Activated CD4-positive, alpha-beta memory T cell treated with anti-CD3 and anti-CD28 coated beads for 36 hours (primary cell): ENCODE measurements at regions of chr17 and their contacts with region 1.

Region 1: GRCh38 chr17:77331301-77331864 is 190.6 kb downstream of the SEC14L1 start:
- DNase-seq: peak; percentile 97
- H3K4me3 Mint-ChIP-seq: peak overlapping the region; percentile 64
- H3K27ac Mint-ChIP-seq: peak overlapping the region; percentile 78
- H3K4me1 Mint-ChIP-seq: peaks cover 38% of the 10 kb centered on the region
- H3K27me3 Mint-ChIP-seq: no peaks in the 10 kb centered on the region

Region 2: DNA sequence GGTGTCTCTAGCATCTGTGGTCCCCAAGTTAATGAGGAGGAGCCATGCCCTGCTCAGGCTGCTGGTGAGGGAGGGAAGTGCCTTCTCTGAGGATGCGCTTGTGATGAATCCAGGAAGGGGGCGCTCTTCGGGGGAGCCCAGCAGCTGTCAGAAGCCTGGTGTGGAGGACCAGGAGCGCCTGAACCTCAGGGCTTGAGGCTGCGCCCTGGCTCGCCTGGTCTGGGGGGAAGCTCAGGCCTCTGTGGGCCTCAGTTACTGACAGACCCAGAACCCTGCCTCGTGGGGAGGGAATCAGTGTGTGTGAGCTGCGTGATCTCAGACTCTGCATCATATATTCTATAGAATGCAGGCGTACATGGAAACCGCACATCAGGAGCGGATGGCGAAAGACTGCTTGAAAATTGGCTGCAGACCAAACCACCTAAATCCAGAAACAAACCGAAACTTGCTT is 64.5 kb before region 1 on chr17:
- CTCF ChIA-PET with region 1: no interaction called
- POLR2A ChIA-PET with region 1: no interaction called
- intact Hi-C with region 1: no loop called
- DNase-seq: no peak
- H3K4me3 Mint-ChIP-seq: no peak overlapping the region
- H3K27ac Mint-ChIP-seq: no peak overlapping the region
- H3K4me1 Mint-ChIP-seq: no peaks in the 10 kb centered on the region
- H3K27me3 Mint-ChIP-seq: no peaks in the 10 kb centered on the region

Region 3: DNA sequence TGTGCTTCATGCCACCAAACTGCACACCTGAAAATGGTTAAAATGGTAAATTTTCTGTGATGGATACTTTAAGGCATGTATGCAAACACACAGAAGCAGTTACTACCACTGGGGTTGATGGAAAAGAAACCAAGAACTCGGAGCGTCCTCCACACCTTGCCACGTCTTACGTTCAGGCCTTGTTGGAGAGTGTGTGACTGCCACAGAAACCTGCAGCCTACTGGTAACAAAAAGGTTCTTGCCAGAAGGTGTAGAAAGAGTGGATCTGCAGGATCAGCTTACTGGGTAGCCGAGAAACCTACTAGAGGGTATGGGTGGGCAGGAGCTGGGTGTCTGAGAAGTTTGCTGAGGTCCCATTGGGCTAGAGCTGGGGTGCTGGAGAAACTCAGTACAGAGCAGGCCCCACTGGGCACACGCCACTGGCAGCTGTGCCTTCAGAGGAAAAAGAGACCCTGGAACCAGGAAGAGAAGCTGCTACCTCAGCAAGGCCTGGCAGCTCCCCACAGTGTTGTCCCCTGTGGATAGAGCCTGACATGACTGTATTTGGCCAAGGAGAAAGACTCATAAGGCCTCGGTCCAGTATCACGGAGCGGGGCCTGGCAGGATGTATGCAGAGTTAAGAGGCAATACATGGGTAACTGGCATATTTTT is 14.0 kb after region 1 on chr17:
- CTCF ChIA-PET with region 1: interaction called, 20 read pairs
- POLR2A ChIA-PET with region 1: interaction called, 3 read pairs
- intact Hi-C with region 1: loop called (anchors 1 kb)
- DNase-seq: no peak
- H3K4me3 Mint-ChIP-seq: no peak overlapping the region
- H3K27ac Mint-ChIP-seq: peak overlapping the region; percentile 7
- H3K4me1 Mint-ChIP-seq: peaks cover 48% of the 10 kb centered on the region
- H3K27me3 Mint-ChIP-seq: no peaks in the 10 kb centered on the region

Region 4: DNA sequence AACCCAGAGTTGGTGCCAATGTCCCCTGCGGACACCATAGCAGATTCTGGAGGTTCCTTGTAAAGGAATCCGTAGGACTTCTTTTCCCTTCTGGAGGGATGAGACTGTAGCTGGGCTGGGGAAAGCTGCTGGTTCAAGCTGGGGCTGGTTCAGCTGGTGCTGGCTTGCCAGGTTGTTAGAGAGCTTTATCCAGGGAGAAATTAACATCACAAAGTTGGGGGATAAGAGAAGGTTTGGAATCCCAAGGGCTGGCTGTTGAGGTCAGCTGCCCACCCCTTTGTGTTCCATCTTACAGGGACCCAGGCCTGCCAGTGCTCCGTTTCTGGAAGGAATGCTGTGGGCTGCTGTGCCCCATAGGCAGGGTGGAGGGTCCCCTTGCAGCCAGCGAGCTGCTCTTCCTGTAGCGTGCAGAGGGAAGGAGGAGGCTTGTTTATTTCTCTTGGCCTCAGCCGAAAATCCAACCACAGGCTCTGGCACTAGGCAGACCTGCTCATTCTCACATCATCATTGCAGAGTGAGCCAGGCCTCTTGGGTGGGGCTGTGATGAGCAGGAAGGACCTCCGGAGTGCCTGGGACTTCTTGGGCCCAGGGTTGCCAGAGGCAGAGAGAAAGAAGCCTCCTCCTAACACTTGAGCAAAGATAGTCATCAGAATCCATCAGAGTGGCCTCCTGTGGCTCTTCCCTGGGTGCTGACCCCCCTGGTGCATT is 60.4 kb after region 1 on chr17:
- CTCF ChIA-PET with region 1: interaction called, 13 read pairs
- POLR2A ChIA-PET with region 1: interaction called, 6 read pairs
- intact Hi-C with region 1: no loop called
- DNase-seq: peak; percentile 78
- H3K4me3 Mint-ChIP-seq: peak overlapping the region; percentile 47
- H3K27ac Mint-ChIP-seq: peak overlapping the region; percentile 88
- H3K4me1 Mint-ChIP-seq: peaks cover 67% of the 10 kb centered on the region
- H3K27me3 Mint-ChIP-seq: no peaks in the 10 kb centered on the region

Region 5: DNA sequence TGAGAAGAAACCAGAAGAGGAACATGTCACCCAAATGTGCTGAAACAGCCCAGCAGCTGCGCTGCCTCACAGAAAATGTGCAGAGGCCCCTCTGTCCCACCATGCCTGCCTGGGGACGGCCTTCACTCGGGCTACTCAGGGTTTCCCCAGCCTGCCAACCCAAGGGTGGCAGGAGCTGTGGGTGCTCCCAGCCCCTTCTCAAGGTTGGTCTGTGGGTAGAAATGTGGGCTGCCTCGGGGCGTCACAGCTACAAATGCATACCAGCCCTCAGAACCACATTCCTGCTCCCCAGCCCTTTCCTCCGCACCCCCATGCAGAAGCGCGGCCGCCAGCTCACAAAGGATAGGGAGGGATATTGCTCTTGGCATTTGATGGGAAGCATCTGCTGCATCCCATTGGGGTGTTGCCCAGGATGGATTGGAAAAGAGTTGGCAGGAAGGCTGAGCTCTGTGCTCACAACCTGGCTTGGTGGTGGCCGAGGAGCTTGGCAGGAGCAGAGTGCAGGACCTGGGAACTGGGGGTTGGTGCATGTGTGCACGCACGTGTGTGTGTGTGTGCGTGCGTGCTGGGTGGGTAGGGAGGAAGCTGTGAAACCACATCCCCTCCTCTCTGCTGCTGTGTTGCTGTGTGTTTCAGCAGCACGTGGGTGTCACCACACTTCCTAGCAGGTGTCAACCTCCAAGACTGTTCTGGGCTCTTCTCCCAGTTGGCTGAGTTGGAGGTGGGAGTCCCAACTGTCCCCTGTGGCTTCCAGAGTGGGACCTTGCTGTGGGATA is 113.8 kb after region 1 on chr17:
- CTCF ChIA-PET with region 1: interaction called, 17 read pairs
- POLR2A ChIA-PET with region 1: interaction called, 3 read pairs
- intact Hi-C with region 1: loop called (anchors 2 kb)
- DNase-seq: peak; percentile 91
- H3K4me3 Mint-ChIP-seq: peak overlapping the region; percentile 72
- H3K27ac Mint-ChIP-seq: peak overlapping the region; percentile 98
- H3K4me1 Mint-ChIP-seq: peaks cover 91% of the 10 kb centered on the region
- H3K27me3 Mint-ChIP-seq: no peaks in the 10 kb centered on the region

Region 6: DNA sequence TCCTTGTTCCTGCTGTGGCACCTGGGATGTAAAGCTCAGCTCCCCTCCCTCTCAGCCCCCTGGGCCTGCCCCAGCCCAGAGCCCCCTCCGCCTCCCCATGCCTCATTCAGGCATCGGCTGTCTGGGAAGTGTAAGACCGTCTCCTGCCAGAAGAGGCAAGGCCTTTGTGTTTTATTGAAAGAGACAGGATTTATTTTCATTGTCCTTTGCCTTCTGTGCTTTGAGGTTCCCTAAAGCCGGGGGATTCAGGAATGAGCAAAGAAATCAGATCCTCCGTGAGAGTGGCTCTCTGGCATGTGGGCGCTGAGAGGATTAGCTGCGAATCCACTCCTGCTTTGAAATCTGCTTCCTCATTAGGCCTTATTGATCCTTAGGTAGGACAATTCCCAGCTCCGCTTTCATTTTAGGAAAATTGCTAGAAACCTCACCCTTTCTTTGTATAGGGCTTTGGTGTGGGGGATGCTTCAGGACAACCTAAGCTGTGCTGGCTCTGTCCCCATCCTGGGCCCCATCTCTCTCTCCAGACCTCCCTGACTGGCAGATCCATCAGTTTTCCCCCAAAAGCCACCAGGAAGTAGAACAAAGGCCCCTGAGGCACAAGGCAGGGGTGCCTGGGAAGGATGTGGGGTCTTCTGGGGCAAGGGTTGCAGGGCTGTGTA is 415.6 kb after region 1 on chr17:
- CTCF ChIA-PET with region 1: no interaction called
- POLR2A ChIA-PET with region 1: no interaction called
- intact Hi-C with region 1: no loop called
- DNase-seq: no peak
- H3K4me3 Mint-ChIP-seq: no peak overlapping the region
- H3K27ac Mint-ChIP-seq: no peak overlapping the region
- H3K4me1 Mint-ChIP-seq: no peaks in the 10 kb centered on the region
- H3K27me3 Mint-ChIP-seq: peaks cover 4% of the 10 kb centered on the region

Region 7: DNA sequence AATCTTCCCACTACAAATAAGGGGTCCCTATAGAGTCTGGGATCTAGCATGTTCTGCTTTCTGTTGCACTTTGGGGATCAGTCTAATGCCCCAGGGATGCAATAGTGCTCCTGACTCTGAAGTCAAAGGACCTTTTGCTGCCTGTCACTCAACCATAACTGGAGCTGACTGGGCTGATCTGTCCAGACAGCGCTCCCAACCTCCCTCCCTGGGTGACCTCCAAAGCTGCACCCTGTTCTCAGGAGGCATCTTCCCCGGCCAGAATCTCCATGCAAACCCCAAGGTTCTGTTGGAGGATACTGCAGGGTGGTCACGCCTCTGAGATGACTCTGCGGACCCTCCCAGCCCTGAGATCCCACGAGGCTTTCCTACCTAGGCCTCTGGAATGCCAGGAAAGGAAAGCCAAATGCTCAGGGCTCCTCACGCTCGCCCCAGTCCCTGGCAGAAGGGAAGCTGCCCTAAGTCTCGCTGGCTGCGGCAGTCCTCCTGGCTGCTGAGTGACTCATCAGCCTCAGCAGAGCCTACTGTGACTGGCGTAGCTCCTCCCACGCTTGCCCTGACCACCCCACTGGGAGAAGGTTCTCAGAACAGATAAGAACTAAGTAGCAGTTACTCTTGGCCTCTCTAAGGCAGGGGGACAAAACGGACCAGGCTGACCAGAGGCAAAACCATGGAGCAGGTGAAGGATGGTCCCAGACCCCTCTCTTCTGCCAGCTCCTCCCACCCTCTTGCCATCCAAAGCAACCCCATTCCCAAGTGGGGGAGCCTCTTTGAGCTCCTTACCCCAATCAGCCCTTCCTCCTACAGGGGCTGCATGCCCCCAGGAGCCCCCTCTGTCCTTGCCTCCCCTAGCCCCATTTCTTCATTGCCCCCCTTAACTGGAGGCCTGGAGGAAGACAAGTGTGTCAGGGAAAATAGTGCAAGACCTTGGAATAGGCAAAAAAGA is 503.1 kb after region 1 on chr17:
- CTCF ChIA-PET with region 1: no interaction called
- POLR2A ChIA-PET with region 1: no interaction called
- intact Hi-C with region 1: loop called (anchors 10 kb)
- DNase-seq: peak; percentile 89
- H3K4me3 Mint-ChIP-seq: no peak overlapping the region
- H3K27ac Mint-ChIP-seq: peak overlapping the region; percentile 43
- H3K4me1 Mint-ChIP-seq: peaks cover 59% of the 10 kb centered on the region
- H3K27me3 Mint-ChIP-seq: peaks cover 14% of the 10 kb centered on the region